Activated naive CD4-positive, alpha-beta T cell treated with anti-CD3 and anti-CD28 coated beads for 36 hours (primary cell): ENCODE measurements at regions of chr19 and their contacts with region 1.

Region 1: GRCh38 chr19:7799640-7800355 is 30.2 kb upstream of the EVI5L start:
- DNase-seq: peak; percentile 76
- H3K4me3 Mint-ChIP-seq: peak overlapping the region; percentile 60
- H3K27ac Mint-ChIP-seq: no peak overlapping the region
- H3K4me1 Mint-ChIP-seq: peaks cover 5% of the 10 kb centered on the region
- H3K27me3 Mint-ChIP-seq: peaks cover 14% of the 10 kb centered on the region

Region 2: DNA sequence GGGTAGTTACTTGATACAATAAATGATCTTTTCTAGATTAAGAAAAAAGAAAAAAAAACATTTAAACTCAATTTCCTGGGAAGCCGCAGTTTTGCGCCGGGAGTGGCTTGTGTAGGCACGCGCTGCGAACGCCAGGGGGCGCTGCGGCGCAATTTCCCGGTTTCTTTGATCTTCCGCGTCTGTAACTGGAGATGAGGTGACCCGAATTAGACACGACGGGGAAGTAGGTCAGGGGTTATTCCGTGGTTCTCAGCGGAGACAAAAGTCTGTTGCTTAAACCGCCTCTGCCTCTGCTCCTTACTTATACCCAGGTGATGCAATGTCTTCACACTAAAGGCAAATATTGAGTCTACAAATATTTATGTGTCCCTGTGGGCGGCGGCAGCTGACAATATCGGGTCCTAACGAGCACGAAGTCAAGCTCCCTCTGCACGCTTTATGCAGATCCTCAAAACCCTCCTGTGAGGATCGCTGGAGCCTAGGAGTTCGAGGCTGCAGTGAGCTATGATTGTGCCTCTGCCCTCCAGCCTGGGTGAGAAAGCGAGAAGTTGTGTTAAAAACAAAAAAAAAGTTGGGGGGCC is 147.6 kb before region 1 on chr19:
- CTCF ChIA-PET with region 1: interaction called, 13 read pairs
- intact Hi-C with region 1: loop called (anchors 1 kb)
- DNase-seq: peak; percentile 92
- H3K4me3 Mint-ChIP-seq: peak overlapping the region; percentile 65
- H3K27ac Mint-ChIP-seq: no peak overlapping the region
- H3K4me1 Mint-ChIP-seq: peaks cover 14% of the 10 kb centered on the region
- H3K27me3 Mint-ChIP-seq: no peaks in the 10 kb centered on the region

Region 3: DNA sequence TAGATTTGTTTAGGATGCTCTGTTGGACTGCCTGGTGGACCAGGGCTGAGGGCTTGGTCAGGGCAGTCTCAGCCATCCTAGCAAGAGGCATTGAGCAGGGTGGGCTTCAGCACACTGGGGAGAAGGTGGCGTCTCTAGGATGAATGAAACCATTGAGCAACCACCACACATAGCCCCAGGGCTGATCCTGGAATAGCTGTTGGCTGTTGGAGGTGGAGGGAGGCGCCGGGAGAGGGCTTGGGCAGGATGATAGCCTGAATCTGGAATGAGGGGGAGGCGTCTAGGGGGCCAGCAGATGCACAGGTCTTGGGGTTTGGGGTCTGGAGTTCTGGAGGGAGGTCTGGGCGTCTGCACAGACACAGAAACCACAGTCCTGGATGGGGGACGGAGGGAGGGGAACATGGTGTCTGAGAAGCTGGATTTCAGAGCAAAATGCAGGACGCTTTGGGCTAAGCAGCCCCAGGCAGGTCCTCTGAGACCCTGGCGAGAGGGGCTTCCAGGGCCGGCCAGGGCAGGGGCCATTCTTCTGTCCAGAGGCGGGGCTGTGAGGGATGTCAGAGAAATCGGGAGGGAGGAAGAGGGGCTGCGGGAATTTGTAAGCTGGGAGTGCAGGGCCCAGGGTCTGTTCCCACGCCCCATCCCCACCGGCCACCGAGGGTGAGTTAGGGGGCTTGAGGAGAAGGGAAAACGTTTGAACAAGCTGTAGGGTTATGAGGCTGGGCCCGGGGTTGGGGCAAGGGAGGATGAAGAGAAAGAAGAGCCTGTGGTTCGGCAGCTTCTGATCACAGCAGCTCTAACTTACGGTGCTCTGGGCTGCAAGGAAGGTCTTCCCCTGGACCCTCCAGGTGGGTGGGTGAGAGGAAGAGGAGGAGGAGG is 114.0 kb before region 1 on chr19:
- CTCF ChIA-PET with region 1: interaction called, 52 read pairs
- intact Hi-C with region 1: loop called (anchors 1 kb)
- DNase-seq: no peak
- H3K4me3 Mint-ChIP-seq: no peak overlapping the region
- H3K27ac Mint-ChIP-seq: no peak overlapping the region
- H3K4me1 Mint-ChIP-seq: peaks cover 9% of the 10 kb centered on the region
- H3K27me3 Mint-ChIP-seq: no peaks in the 10 kb centered on the region

Region 4: DNA sequence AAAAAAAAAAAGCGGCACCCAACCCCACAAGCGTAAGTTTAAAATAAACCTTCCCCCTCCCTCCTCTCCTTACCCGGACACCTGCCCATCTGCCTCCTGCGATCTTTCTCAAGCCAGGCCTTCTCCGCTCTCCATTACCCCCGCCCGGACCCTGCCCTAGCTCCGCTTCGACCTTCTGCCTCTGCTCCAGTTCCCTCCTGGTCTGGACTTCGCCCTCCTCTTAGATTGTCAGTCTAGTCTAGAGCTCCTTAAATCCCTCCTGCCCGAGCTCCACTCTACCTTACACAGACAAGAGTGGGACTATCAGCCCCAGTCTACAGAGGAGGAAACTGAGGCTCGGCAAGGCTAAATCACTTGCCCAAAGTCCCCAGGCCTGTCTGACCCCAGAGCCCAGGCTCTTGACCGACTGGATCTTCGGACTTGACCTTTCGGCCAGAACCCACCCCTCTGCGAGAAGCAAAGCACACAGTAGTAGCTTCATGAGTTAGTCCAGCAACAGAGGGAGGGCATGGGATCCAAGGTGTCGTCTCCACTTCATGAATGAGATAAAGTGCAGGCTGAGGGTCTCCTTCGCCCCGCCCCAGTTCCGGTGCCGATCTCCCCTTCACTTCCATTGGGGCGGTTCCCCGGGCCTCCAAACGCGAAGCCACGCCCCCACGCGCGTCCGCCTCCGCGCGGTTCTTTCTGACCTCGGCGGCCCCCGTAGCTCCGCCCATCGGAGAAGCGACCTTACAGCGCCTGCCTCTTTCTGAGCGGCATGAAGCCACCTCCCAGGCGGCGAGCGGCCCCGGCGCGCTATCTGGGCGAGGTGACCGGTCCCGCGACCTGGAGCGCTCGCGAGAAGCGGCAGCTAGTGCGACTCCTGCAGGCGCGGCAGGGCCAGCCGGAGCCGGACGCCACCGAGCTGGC is 120.1 kb after region 1 on chr19 and contains the start of gene SNAPC2:
- CTCF ChIA-PET with region 1: no interaction called
- intact Hi-C with region 1: no loop called
- DNase-seq: peak; percentile 96
- H3K4me3 Mint-ChIP-seq: peak within 1 kb of the TSS; percentile 81
- H3K27ac Mint-ChIP-seq: peak within 1 kb of the TSS; percentile 73
- H3K4me1 Mint-ChIP-seq: peaks cover 38% of the 10 kb centered on the region
- H3K27me3 Mint-ChIP-seq: peaks cover 25% of the 10 kb centered on the region
- total RNA-seq, gene SNAPC2: 10.9 to 12.4 TPM